ENCODE measurements at regions of chr4 and their contacts with region 1.

Region 1: DNA sequence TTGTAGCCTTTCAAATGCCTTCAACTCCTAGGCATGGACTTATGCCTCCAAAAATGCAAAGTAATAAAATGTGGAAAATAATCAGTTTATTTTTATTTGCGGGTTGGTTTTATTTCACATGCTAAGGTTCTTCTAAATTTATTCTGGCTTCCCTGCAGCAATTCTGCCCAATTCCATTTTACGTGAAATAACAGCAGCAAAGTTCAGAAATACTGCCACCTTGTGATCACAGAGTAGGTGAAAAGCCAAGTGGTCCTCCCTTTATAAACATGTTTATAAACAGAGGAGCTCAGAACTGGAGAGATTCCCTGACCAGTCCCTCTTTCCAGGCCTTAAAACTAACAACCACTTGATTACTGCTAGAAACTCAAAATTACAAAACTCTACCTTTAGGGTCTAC is 14.7 kb upstream of the DCHS2 start:
- DNase-seq: no peak
- H3K4me3 ChIP-seq: peak overlapping the region; percentile 14; the same call in 1 of the 2 replicates
- H3K27ac ChIP-seq: peak overlapping the region; percentile 89
- H3K4me1 ChIP-seq: peaks cover 19% of the 10 kb centered on the region
- H3K27me3 ChIP-seq: no peaks in the 10 kb centered on the region
- CTCF ChIP-seq: peak; percentile 30; the same call in 1 of the 2 replicates

Region 2: GRCh38 chr4:154416190-154416547 is 90.1 kb before region 1 on chr4:
- CTCF ChIA-PET with region 1: interaction called, 14 read pairs
- POLR2A ChIA-PET with region 1: no interaction called
- intact Hi-C with region 1: no loop called
- DNase-seq: no peak
- H3K4me3 ChIP-seq: peak overlapping the region; percentile 53
- H3K27ac ChIP-seq: no peak overlapping the region
- H3K4me1 ChIP-seq: no peaks in the 10 kb centered on the region
- H3K27me3 ChIP-seq: no peaks in the 10 kb centered on the region
- CTCF ChIP-seq: no peak